Endothelial cell of umbilical vein (primary cell): ENCODE measurements at regions of chr15 and their contacts with region 1.

Region 1: DNA sequence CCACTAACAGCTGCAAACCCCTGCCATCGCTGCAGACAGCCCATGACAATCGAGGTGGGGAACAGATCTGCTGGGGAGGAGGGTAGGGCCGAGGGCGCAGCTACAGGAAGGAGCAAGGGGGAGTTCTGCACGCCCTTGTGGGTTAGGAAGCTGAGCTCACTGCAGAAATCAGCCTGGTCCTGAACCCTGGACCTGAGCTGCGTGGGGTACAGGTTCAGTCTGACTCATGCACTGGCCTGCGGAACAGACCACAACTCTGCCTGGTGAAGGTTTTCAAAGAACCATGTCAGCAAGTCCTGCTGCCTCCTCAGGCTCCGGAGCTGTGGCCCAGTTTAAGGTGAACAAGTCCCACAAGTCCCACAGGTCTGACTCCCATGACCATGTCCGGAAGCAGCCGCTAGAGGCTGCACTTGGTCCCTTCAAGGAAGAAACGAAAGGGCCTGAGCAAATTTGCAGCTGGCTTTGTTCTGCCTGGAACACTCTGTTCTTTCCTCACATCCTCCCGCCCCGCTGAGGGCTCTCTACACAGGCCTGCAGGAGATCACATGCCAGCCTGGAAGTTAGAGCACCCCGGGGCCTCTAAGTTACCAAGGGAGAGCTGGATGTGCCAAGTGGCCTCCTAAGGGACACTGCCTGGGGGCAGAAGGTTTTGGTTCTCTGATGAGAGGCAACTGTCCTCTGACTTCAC is 49.4 kb upstream of the AKAP13 start:
- DNase-seq: peak; percentile 73
- H3K4me3 ChIP-seq: no peak overlapping the region
- H3K27ac ChIP-seq: peak overlapping the region; percentile 6
- H3K4me1 ChIP-seq: peaks cover 14% of the 10 kb centered on the region
- H3K27me3 ChIP-seq: no peaks in the 10 kb centered on the region
- CTCF ChIP-seq: peak; percentile 72 to 79
- POLR2A ChIP-seq: no peak

Region 2: DNA sequence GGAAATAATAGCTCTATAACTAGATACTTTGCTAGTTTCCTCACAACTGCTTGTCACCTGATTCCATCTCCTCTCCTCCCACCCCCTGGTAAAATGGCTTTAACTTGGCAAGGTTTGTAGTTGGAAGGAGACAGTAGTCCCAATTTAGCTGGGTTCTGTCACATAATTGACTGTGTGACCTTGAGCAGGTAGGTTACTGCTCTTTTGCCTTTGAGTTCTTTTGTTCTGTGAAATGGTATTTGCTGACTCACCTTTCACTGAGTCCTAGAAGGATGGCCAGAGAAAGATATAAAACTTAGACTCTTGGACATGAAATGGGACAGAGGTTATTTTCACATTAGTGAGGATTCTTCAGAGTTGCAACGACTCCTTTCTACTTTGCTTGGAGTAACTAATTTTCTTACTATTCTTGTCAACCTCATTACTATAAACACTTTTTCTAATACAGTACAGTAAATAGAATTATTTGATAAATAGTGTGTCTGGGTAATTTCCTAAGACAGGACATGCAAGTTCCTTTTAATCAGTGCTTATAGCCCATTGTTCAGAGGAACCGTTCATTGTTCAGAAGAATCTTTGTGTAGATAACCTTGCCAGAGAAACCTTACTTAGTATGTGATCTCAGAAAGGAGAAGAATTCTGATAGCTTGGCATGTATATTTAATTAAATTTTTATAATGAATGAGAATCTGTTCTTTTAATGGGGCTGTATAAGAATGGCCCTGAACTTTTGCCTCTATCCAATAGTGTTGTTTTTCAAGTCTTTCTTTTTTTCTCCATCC is 63.7 kb after region 1 on chr15:
- CTCF ChIA-PET with region 1: no interaction called
- POLR2A ChIA-PET with region 1: interaction called, 13 read pairs
- dilution Hi-C with region 1: no loop called
- intact Hi-C with region 1: no loop called
- DNase-seq: peak; percentile 69
- H3K4me3 ChIP-seq: peak overlapping the region in 1 of 3 experiments; percentile 15
- H3K27ac ChIP-seq: peak overlapping the region; percentile 3
- H3K4me1 ChIP-seq: peaks cover 21% of the 10 kb centered on the region
- H3K27me3 ChIP-seq: no peaks in the 10 kb centered on the region
- CTCF ChIP-seq: no peak
- POLR2A ChIP-seq: no peak

Region 3: GRCh38 chr15:85412956-85413854 is 82.2 kb after region 1 on chr15:
- CTCF ChIA-PET with region 1: interaction called, 74 read pairs
- POLR2A ChIA-PET with region 1: no interaction called
- dilution Hi-C with region 1: no loop called
- intact Hi-C with region 1: loop called (anchors 1 kb)
- DNase-seq: peak; percentile 98
- H3K4me3 ChIP-seq: no peak overlapping the region
- H3K27ac ChIP-seq: peak overlapping the region; percentile 77
- H3K4me1 ChIP-seq: peaks cover 38% of the 10 kb centered on the region
- H3K27me3 ChIP-seq: no peaks in the 10 kb centered on the region
- CTCF ChIP-seq: no peak
- POLR2A ChIP-seq: no peak

Region 4: GRCh38 chr15:85485956-85486567 is 155.0 kb after region 1 on chr15:
- CTCF ChIA-PET with region 1: interaction called, 14 read pairs
- POLR2A ChIA-PET with region 1: no interaction called
- dilution Hi-C with region 1: no loop called
- intact Hi-C with region 1: no loop called
- DNase-seq: peak; percentile 78
- H3K4me3 ChIP-seq: no peak overlapping the region
- H3K27ac ChIP-seq: no peak overlapping the region
- H3K4me1 ChIP-seq: peaks cover 4% of the 10 kb centered on the region
- H3K27me3 ChIP-seq: no peaks in the 10 kb centered on the region
- CTCF ChIP-seq: peak; percentile 58 to 69
- POLR2A ChIP-seq: no peak

Region 5: DNA sequence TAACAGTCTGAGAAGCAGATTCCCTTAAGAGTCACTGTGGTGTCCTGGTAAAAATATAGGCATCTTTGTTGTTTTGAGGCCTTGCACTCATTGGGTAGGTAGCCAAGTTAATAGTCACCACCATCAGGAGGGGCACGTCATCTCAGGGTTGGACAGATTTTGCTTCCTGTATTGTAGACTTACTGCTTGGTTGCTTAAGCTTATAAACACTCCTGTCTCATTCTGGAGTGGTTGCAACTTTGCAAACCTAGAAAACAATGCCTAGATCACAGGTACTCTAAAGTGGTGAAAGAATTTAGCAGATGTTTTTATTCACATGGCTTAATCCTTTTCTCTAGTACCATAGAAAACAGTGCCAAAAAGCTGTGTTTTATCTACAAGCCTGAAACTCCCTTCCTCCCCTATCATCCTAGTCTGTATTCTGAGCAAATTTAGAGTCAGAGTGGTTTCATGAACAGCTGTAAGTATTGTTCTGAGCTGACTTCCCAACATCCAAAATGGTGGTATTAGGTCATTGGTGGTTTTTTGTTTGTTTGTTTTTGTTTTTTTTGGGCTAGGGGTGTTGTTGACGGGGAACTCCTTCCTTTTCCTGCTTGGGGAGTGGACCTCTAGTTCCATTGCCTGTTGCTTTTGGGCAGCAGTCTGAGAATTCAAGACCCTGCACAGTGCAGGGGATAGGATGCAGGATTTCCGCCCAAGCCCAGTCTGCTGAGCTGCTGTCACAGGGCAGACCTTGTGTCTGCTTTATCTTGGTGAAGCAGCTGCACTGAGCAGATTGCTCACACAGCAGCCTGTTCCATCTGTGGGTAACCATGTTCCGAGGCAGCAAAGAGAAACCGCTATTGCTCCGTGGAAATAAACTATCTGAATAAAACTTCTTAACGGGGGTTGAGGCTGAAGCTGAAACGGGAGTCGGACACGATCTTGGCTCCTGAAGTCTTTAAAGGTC is 251.4 kb after region 1 on chr15:
- CTCF ChIA-PET with region 1: no interaction called
- POLR2A ChIA-PET with region 1: no interaction called
- dilution Hi-C with region 1: no loop called
- intact Hi-C with region 1: loop called (anchors 1 kb)
- DNase-seq: peak; percentile 98
- H3K4me3 ChIP-seq: peak overlapping the region; percentile 20 to 55 (median 33)
- H3K27ac ChIP-seq: peak overlapping the region; percentile 91
- H3K4me1 ChIP-seq: peaks cover 67% of the 10 kb centered on the region
- H3K27me3 ChIP-seq: no peaks in the 10 kb centered on the region
- CTCF ChIP-seq: no peak
- POLR2A ChIP-seq: peak; percentile 78